Mammary epithelial cell (primary cell): ENCODE measurements at regions of chr11 and their contacts with region 1.

Region 1: DNA sequence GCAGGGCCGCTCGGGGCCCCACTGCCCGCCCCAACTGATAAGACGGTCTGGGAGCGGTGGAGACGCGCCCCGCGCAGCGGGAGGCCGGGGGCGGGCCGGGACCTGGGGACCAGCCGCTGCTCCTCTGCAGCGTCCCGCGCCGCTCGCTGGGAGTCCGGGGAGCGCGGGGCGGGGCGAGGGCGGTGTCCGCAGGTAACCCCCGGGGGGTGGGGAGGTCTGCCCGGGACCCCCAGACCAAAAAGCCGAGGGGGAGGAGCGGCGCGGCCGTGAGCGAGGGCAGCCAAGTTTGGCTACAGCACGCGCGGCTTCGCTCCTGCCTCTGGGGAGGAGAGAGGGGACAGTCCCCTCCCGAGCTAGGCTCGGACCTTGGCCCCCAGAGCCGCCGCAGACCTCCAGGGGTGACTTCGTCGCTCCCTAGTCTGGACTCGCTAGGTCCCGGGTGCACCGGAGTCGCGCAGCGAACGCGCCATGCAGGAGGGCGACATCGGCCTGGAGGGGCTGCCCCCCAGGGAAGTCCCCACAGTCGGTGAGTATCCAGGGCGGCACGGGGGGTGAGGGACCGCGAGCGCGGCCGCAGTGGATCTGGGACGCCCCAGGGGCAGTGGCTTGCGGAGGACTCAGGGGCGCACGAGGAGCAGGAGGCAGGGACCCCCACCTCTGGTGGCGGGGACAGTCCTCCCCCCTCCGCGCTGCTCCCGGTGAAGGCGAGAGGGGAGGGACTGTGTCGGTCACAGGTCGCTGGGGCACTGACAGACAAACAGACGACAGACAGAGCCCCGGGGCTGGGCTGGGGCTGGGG is 92.3 kb upstream of the ANO1 start:
- DNase-seq: no peak
- H3K4me3 ChIP-seq: peak overlapping the region; percentile 55 to 72 (median 67)
- H3K27ac ChIP-seq: peak overlapping the region; percentile 61
- H3K4me1 ChIP-seq: peaks cover 26% of the 10 kb centered on the region
- H3K27me3 ChIP-seq: no peaks in the 10 kb centered on the region
- CTCF ChIP-seq: no peak

Region 2: GRCh38 chr11:70128435-70128906 is 142.6 kb after region 1 on chr11:
- CTCF ChIA-PET with region 1: no interaction called
- dilution Hi-C with region 1: no loop called
- in situ Hi-C with region 1: no loop called
- intact Hi-C with region 1: loop called (anchors 5 kb)
- DNase-seq: peak; percentile 60
- H3K4me3 ChIP-seq: no peak overlapping the region
- H3K27ac ChIP-seq: no peak overlapping the region
- H3K4me1 ChIP-seq: peaks cover 46% of the 10 kb centered on the region
- H3K27me3 ChIP-seq: no peaks in the 10 kb centered on the region
- CTCF ChIP-seq: peak in 1 of 2 donors; percentile 39